Activated B cell treated with CpG ODN at 0.5 μM for 24 hours (primary cell): ENCODE measurements at regions of chr19 and their contacts with region 1.

Region 1: DNA sequence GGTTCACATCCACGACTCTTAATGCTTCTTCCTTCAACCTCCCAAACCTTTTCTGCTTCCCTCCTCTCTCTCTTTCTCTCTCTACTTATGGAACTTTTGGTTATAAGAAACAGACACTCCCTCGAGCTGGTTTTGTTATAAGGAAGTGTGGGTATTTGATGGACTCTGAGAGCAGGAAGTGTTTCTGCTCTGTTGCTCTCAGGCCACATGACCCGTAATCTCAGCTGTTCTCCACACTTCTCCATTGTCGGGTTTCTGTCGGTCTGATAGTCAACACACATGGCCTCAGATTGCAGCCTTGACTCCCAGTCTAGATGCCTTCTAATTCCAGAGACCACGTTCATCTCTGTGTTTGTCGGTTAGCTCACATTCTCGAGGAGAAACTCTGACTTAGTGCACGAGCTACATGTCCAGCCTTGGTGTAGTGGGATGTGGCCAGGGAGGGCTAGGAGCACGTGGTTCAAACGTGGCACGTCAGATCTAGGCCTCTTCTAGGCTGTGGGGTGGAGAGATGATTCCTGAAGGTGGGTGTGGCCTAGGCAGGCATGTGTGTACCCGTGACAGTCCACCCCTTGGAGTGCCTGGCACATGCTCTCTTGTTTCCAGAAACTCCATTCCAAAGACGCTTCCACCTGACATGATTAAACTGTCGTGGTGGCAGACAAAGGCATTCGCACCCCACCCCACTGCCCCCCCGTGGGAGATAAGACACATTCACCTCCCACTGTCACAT is 26.3 kb downstream of the CNFN start:
- DNase-seq: no peak
- ATAC-seq: peak; percentile 34
- H3K4me3 Mint-ChIP-seq: peak overlapping the region; percentile 64
- H3K27ac Mint-ChIP-seq: peak overlapping the region; percentile 88
- H3K4me1 Mint-ChIP-seq: peaks cover 46% of the 10 kb centered on the region
- H3K27me3 Mint-ChIP-seq: no peaks in the 10 kb centered on the region
- CTCF ChIP-seq: no peak

Region 2: GRCh38 chr19:42229855-42230351 is 133.9 kb before region 1 on chr19:
- CTCF ChIA-PET with region 1: no interaction called
- POLR2A ChIA-PET with region 1: no interaction called
- intact Hi-C with region 1: no loop called
- DNase-seq: no peak
- ATAC-seq: no peak
- H3K4me3 Mint-ChIP-seq: no peak overlapping the region
- H3K27ac Mint-ChIP-seq: no peak overlapping the region
- H3K4me1 Mint-ChIP-seq: no peaks in the 10 kb centered on the region
- H3K27me3 Mint-ChIP-seq: no peaks in the 10 kb centered on the region
- CTCF ChIP-seq: no peak

Region 3: DNA sequence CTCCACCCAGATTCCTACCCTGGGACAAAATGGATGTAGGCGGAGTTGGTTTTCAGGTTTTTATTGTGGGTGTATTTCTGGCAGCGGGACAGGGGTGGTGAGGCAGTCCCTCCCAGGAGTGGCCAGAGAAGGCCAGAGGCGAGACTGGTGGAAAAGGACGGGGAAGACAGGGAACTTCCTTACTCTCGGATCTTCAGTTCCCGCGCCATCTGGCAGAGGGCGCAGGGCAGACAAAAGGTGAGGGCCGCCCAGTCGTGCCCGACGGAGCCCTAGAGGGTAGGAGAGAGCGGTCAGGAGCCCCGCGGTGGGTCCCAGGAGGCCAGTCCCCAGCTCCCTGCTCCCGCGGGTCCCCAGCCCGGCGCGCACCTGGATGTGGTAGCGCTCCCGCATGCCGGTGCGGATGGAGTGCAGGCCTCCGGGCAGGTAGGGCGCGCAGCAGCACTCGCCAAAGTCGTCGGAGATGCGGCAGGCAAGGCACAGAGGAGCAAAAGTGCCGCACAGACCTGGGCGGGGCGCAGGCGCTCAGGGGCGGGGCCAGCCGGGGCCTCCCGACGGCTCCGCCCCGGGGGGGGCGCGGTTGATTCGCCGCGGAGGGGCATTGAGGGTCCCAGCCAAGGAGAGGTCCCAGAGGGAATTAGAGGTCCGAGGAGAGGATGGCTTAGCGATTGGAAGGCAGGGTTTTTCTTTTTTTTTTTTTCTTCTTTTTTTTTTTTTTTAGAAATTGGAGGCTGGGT is 23.4 kb after region 1 on chr19:
- CTCF ChIA-PET with region 1: no interaction called
- POLR2A ChIA-PET with region 1: interaction called, 20 read pairs
- intact Hi-C with region 1: loop called (anchors 1 kb)
- DNase-seq: peak; percentile 86
- ATAC-seq: peak; percentile 95
- H3K4me3 Mint-ChIP-seq: peak overlapping the region; percentile 78
- H3K27ac Mint-ChIP-seq: peak overlapping the region; percentile 63
- H3K4me1 Mint-ChIP-seq: peaks cover 7% of the 10 kb centered on the region
- H3K27me3 Mint-ChIP-seq: peaks cover 32% of the 10 kb centered on the region
- CTCF ChIP-seq: no peak

Region 4: GRCh38 chr19:42396381-42397262 is 32.8 kb after region 1 on chr19:
- CTCF ChIA-PET with region 1: interaction called, 4 read pairs
- POLR2A ChIA-PET with region 1: interaction called, 26 read pairs
- intact Hi-C with region 1: loop called (anchors 1 kb)
- DNase-seq: peak; percentile 96
- ATAC-seq: peak; percentile 96
- H3K4me3 Mint-ChIP-seq: peak overlapping the region; percentile 95
- H3K27ac Mint-ChIP-seq: peak overlapping the region; percentile 89
- H3K4me1 Mint-ChIP-seq: peaks cover 45% of the 10 kb centered on the region
- H3K27me3 Mint-ChIP-seq: peaks cover 5% of the 10 kb centered on the region
- CTCF ChIP-seq: no peak

Region 5: GRCh38 chr19:42401365-42402303 is 37.9 kb after region 1 on chr19:
- CTCF ChIA-PET with region 1: interaction called, 4 read pairs
- POLR2A ChIA-PET with region 1: interaction called, 26 read pairs
- intact Hi-C with region 1: loop called (anchors 1 kb)
- DNase-seq: peak; percentile 74
- ATAC-seq: peak; percentile 49
- H3K4me3 Mint-ChIP-seq: peak overlapping the region; percentile 80
- H3K27ac Mint-ChIP-seq: peak overlapping the region; percentile 72
- H3K4me1 Mint-ChIP-seq: peaks cover 46% of the 10 kb centered on the region
- H3K27me3 Mint-ChIP-seq: no peaks in the 10 kb centered on the region
- CTCF ChIP-seq: no peak

Region 6: DNA sequence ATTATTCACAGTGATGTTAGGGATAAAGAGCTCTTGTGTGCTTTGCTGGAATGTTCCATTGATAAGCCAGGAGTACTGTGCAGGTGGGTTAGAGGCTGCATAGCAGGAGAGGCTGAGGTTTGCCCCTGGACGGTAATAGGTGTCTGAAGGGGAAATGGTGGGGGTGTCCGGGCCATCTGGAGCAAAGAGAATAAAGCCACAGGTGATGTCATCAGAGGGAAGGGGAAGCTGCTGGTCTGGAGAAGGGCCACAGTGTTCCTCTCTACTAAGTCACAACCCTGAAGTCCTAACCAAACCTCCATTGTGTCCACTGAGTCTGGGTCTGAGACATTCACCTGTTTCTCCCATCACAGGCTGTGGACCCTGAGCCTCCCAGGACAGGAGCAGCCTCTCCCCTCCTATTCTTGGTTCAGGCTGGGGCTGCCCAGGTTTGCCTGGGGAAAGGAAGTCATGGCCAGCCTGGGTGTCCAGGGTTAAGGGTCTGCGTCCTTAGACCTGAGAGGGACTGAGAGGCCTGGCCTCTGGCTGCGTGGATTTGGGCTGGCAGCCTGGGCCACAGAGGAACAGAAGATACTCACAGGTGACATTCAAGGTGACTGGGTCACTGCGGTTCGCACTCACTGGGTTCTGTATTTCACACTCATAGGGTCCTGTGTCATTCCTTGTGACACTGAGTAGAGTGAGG is 157.7 kb after region 1 on chr19:
- CTCF ChIA-PET with region 1: no interaction called
- POLR2A ChIA-PET with region 1: no interaction called
- intact Hi-C with region 1: no loop called
- DNase-seq: no peak
- ATAC-seq: no peak
- H3K4me3 Mint-ChIP-seq: no peak overlapping the region
- H3K27ac Mint-ChIP-seq: no peak overlapping the region
- H3K4me1 Mint-ChIP-seq: peaks cover 22% of the 10 kb centered on the region
- H3K27me3 Mint-ChIP-seq: no peaks in the 10 kb centered on the region
- CTCF ChIP-seq: no peak

Region 7: GRCh38 chr19:42576241-42576640 is 212.5 kb after region 1 on chr19:
- CTCF ChIA-PET with region 1: no interaction called
- POLR2A ChIA-PET with region 1: interaction called, 10 read pairs
- intact Hi-C with region 1: no loop called
- DNase-seq: no peak
- ATAC-seq: peak; percentile 61
- H3K4me3 Mint-ChIP-seq: peak overlapping the region; percentile 36
- H3K27ac Mint-ChIP-seq: peak overlapping the region; percentile 62
- H3K4me1 Mint-ChIP-seq: peaks cover 29% of the 10 kb centered on the region
- H3K27me3 Mint-ChIP-seq: no peaks in the 10 kb centered on the region
- CTCF ChIP-seq: no peak

Region 8: DNA sequence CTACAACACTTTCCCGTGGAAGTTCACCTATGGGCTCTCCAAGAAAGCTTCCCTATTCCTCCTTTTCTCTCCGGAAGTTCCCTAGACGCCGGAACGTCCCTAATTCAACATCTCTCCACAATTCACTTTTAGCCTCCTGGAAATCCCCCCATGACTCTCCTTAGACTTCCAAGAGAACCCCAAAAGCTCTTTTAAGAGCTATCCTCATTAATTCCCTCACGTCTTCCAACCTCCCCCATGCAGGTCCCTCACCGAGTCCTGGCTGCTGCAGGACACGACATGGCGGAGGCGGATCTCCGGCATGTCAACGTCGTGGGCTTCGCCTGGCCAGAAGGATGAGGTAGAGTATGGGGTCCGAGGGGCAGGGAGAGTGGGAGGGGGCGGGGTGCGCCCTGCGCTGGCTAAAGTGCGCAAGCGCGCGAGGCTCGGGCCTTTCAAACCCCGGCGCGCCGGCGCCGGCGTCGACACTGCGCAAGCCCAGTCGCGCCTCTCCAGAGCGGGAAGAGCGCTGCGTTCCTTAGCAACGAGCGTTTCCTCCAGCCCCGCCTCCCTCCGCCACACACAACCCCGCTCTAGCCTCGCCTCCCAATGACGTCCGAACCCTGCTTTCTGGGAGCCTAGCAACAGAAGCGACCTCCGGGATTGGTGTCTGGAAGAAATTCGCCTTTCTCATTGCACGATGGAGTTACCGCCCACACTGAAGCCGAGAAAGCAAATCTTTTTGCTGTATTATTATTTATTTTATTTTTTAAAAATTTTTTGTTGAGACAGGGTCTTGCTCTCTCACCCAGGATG is 1211.6 kb after region 1 on chr19 and contains the starts of genes PINLYP and XRCC1:
- CTCF ChIA-PET with region 1: no interaction called
- POLR2A ChIA-PET with region 1: interaction called, 19 read pairs
- intact Hi-C with region 1: no loop called
- DNase-seq: peak; percentile 87
- ATAC-seq: peak; percentile 97
- H3K4me3 Mint-ChIP-seq: peak within 1 kb of the TSS; percentile 96
- H3K27ac Mint-ChIP-seq: peak within 1 kb of the TSS; percentile 92
- H3K4me1 Mint-ChIP-seq: peaks cover 44% of the 10 kb centered on the region
- H3K27me3 Mint-ChIP-seq: no peaks in the 10 kb centered on the region
- CTCF ChIP-seq: no peak
- total RNA-seq, gene PINLYP: 1.9 and 2.1 TPM in 2 replicates
- total RNA-seq, gene XRCC1: 31.9 and 34.5 TPM in 2 replicates